HCT116 (cell line): ENCODE measurements at regions of chr5 and their contacts with region 1.

Region 1: GRCh38 chr5:141878711-141879425 is 658 bp upstream of the PCDH1 start:
- DNase-seq: peak; percentile 86
- ATAC-seq: peak; percentile 71
- H3K4me3 ChIP-seq: peak overlapping the region; percentile 61 to 87
- H3K27ac ChIP-seq: peak overlapping the region; percentile 40; the same call in 1 of the 2 replicates
- H3K4me1 ChIP-seq: peaks cover 13 to 46% of the 10 kb centered on the region in 2 experiments; a peak in 3 of 4 replicates
- H3K27me3 ChIP-seq: peaks cover 4% of the 10 kb centered on the region; the same call in 1 of the 2 replicates
- CTCF ChIP-seq: peak in 2 of 3 experiments; percentile 96 to 99; a peak in 4 of 6 replicates
- POLR2A ChIP-seq: no peak
- RAD21 ChIP-seq: no peak

Region 2: DNA sequence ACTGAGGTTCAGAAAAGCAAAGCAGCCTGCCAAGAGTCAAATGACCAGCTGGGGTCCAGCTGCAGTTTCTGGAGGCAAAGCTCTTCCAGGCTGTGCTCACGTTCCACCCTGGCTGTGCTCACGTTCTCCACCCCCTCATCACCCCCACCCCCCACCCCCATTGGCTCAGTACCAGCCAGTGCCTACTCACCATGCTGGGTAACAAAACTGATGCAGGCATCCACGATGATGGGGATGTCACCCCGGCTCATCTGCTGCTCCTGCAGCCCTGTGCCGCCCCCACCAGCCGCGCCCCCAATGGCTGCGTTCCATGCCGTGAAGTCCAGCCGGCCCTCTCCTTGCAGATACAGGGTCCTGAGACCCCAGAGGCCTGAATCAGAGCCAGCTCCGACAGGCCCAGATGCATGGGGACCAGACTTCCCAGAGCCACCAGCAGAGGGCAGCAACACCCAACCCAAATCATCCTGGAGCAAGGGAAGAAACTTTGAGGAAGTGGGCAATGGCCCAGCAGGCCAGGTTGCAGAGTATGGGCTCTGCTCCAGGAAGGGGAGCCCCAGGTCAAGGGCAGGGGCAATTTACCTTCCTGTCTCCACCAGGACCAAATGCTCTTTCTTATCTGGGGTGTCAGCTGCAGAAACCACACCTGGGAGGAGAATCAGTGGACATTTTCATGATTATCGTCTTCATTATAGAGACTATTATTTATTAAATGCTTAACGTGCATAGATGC is 214.0 kb before region 1 on chr5:
- CTCF ChIA-PET with region 1: interaction called, 7 read pairs
- POLR2A ChIA-PET with region 1: no interaction called
- RAD21 ChIA-PET with region 1: interaction called in 1 of 2 experiments, 3 read pairs
- intact Hi-C with region 1: loop called (anchors 1 kb)
- DNase-seq: peak; percentile 54
- ATAC-seq: peak; percentile 95
- H3K4me3 ChIP-seq: no peak overlapping the region
- H3K27ac ChIP-seq: no peak overlapping the region
- H3K4me1 ChIP-seq: 0 out of 4 replicates have a peak, but pooled peaks cover 0 to 3% of the 10 kb centered on the region in 2 experiments
- H3K27me3 ChIP-seq: no peaks in the 10 kb centered on the region
- CTCF ChIP-seq: peak; percentile 69 to 94 (median 92); a peak in 5 of 6 replicates
- POLR2A ChIP-seq: no peak
- RAD21 ChIP-seq: peak; percentile 95

Region 3: DNA sequence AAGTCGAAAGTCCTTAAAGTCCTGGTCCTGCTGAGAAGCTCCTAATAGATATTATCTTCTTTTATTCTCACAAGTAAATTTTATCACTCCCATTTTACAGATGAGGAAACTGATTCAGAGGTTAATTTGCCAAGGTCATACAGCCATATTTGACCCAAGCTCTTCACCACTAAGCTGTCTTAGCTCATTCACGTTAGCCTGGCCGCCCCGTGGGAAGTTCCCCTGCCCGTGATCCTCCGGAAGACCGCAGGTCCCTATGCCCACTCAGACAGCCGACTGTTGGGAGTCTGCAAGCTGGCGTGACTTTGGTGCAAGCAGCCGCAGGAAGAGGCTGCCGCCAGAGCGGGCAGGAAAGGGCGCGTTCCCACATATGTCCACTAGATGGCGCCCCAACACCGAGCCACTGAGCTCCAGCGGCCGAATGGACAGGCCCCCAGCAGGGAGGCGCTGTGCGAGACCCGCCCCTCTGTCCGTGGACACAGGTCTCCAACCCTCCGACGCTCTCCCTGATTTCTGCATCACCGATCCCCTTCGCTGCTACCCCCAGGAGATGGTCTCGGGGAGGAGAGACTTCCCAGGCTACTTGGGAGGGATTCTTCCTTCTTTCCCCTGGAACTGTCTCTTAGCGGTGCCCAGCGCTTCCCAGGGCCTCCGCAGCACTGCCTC is 186.9 kb before region 1 on chr5:
- CTCF ChIA-PET with region 1: interaction called, 31 read pairs
- POLR2A ChIA-PET with region 1: no interaction called
- RAD21 ChIA-PET with region 1: interaction called, 8 to 20 read pairs
- intact Hi-C with region 1: loop called (anchors 1 kb)
- DNase-seq: peak; percentile 51
- ATAC-seq: peak; percentile 98
- H3K4me3 ChIP-seq: peak overlapping the region in 1 of 2 experiments; percentile 33; a peak in 1 of 4 replicates
- H3K27ac ChIP-seq: no peak overlapping the region
- H3K4me1 ChIP-seq: peaks cover 0 to 18% of the 10 kb centered on the region in 2 experiments; a peak in 3 of 4 replicates
- H3K27me3 ChIP-seq: no peaks in the 10 kb centered on the region
- CTCF ChIP-seq: peak; percentile 90 to 98 (median 92)
- POLR2A ChIP-seq: no peak
- RAD21 ChIP-seq: peak; percentile 100

Region 4: GRCh38 chr5:141757402-141757801 is 121.5 kb before region 1 on chr5:
- CTCF ChIA-PET with region 1: interaction called, 26 read pairs
- POLR2A ChIA-PET with region 1: interaction called, 3 read pairs
- RAD21 ChIA-PET with region 1: interaction called, 3 to 10 read pairs
- intact Hi-C with region 1: loop called (anchors 1 kb)
- DNase-seq: peak; percentile 34
- ATAC-seq: peak; percentile 93
- H3K4me3 ChIP-seq: no peak overlapping the region
- H3K27ac ChIP-seq: no peak overlapping the region
- H3K4me1 ChIP-seq: peaks cover 0 to 9% of the 10 kb centered on the region in 2 experiments; a peak in 1 of 4 replicates
- H3K27me3 ChIP-seq: peaks cover 3% of the 10 kb centered on the region; the same call in 1 of the 2 replicates
- CTCF ChIP-seq: peak; percentile 61 to 75 (median 71)
- POLR2A ChIP-seq: no peak
- RAD21 ChIP-seq: peak; percentile 85

Region 5: DNA sequence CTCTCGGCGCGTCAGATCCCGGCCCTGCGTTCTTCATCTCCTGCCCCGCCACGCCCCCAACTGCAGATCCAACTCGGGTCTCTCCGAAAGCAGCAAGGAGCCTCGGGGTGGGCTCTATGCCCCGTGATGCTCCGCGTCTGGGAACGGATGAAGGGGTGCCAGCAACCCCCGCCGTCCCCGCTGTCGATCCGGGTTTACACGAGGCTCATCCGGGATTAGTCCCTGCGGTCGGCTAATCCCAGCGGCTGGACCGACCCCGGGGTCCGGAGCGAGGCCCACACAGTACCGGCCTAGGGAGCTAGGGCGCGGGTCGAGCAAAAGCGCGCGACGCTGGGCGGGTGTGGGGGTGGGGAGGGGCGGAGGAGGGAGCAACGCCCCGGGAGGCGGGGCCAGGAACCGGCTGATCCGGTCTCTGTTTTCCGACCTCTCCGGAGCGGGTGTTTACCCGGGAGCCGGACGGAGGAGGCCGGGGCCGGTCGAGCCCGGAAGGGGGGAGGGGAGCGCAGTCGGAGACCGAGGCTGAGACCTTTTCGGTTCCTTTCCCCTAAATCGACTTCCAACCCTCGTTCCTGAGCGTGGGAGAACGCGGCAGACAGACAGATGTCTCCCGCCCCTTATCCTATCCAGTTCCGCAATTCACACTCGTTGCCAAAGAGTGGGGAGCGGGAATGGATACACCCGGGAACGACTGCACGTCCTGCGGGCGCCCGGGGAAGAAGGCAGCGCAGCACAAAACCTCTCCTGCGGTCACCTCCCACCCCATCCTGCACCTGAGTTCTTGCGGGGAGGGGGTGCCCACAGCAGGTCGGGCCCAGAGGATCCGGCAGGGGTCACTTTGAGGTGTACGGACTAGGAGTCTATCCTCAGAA is 29.3 kb before region 1 on chr5:
- CTCF ChIA-PET with region 1: interaction called, 7 read pairs
- POLR2A ChIA-PET with region 1: no interaction called
- RAD21 ChIA-PET with region 1: interaction called in 1 of 2 experiments, 3 read pairs
- intact Hi-C with region 1: loop called (anchors 2 kb)
- DNase-seq: no peak
- ATAC-seq: peak; percentile 75
- H3K4me3 ChIP-seq: peak overlapping the region; percentile 86 to 87
- H3K27ac ChIP-seq: peak overlapping the region; percentile 95
- H3K4me1 ChIP-seq: peaks cover 30 to 46% of the 10 kb centered on the region in 2 experiments
- H3K27me3 ChIP-seq: no peaks in the 10 kb centered on the region
- CTCF ChIP-seq: 0 out of 6 replicates have a peak, but pooled peaks of 1 of the 3 experiments have one; percentile 6
- POLR2A ChIP-seq: peak; percentile 69
- RAD21 ChIP-seq: no peak

Region 6: GRCh38 chr5:141960449-141961202 is 81.8 kb after region 1 on chr5:
- CTCF ChIA-PET with region 1: interaction called, 31 read pairs
- POLR2A ChIA-PET with region 1: no interaction called
- RAD21 ChIA-PET with region 1: interaction called, 3 to 6 read pairs
- intact Hi-C with region 1: no loop called
- DNase-seq: peak; percentile 72
- ATAC-seq: peak; percentile 96
- H3K4me3 ChIP-seq: no peak overlapping the region
- H3K27ac ChIP-seq: no peak overlapping the region
- H3K4me1 ChIP-seq: peaks cover 0 to 10% of the 10 kb centered on the region in 2 experiments; a peak in 1 of 4 replicates
- H3K27me3 ChIP-seq: no peaks in the 10 kb centered on the region
- CTCF ChIP-seq: peak; percentile 87 to 96 (median 89)
- POLR2A ChIP-seq: no peak
- RAD21 ChIP-seq: peak; percentile 97

Region 7: DNA sequence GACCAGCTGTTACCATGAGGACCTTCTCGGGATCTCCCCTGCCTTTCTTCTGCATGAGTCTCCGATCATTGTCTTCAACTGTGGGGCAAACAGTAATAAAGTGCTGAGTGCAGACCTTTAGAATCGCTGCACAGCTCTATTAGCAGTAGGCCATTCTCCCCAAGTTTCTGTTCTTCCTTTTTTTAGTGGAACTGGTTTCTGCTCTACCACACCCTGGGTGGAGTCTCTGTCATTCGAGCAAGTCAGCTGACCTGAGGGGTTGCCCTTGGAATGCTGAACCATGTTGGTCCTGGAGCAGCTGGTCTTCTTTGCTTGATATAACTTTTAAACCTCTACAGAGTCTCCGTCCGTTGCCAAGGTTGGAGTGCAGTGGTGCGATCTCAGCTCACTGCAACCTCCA is 167.3 kb after region 1 on chr5:
- CTCF ChIA-PET with region 1: no interaction called
- POLR2A ChIA-PET with region 1: no interaction called
- RAD21 ChIA-PET with region 1: no interaction called
- intact Hi-C with region 1: no loop called
- DNase-seq: no peak
- ATAC-seq: no peak
- H3K4me3 ChIP-seq: no peak overlapping the region
- H3K27ac ChIP-seq: no peak overlapping the region
- H3K4me1 ChIP-seq: no peaks in the 10 kb centered on the region; a peak in 1 of 4 replicates
- H3K27me3 ChIP-seq: no peaks in the 10 kb centered on the region
- CTCF ChIP-seq: no peak
- POLR2A ChIP-seq: no peak
- RAD21 ChIP-seq: no peak